ENCODE measurements at regions of chr10 and their contacts with region 1.

Region 1: GRCh38 chr10:83680470-83680891 is 458.8 kb upstream of the GHITM start:
- DNase-seq: peak; percentile 46
- H3K4me3 Mint-ChIP-seq: no peak overlapping the region
- H3K27ac Mint-ChIP-seq: peak overlapping the region; percentile 55
- H3K4me1 Mint-ChIP-seq: peaks cover 29% of the 10 kb centered on the region
- H3K27me3 Mint-ChIP-seq: no peaks in the 10 kb centered on the region

Region 2: DNA sequence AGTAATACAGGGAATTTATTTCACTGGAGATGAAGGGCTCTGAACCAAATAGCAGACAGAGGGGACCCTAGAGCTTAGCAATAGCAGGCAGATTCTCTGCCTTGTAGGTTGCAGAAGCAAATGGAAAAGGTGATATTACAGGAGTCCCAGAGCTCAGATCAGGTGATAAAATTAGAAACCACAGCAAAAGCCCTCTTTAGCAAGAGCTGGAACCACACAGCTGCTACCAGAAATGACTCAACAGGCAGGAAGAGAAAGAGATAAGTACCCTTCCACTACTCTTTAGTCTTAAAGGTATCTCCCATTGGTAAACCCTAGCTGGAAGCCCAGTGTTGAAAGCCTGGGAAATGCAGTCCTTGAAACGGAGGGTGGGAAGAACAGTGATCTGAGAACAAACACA is 76.8 kb before region 1 on chr10:
- intact Hi-C with region 1: loop called (anchors 1 kb)
- DNase-seq: peak; percentile 10
- H3K4me3 Mint-ChIP-seq: no peak overlapping the region
- H3K27ac Mint-ChIP-seq: no peak overlapping the region
- H3K4me1 Mint-ChIP-seq: peaks cover 4% of the 10 kb centered on the region
- H3K27me3 Mint-ChIP-seq: no peaks in the 10 kb centered on the region

Region 3: DNA sequence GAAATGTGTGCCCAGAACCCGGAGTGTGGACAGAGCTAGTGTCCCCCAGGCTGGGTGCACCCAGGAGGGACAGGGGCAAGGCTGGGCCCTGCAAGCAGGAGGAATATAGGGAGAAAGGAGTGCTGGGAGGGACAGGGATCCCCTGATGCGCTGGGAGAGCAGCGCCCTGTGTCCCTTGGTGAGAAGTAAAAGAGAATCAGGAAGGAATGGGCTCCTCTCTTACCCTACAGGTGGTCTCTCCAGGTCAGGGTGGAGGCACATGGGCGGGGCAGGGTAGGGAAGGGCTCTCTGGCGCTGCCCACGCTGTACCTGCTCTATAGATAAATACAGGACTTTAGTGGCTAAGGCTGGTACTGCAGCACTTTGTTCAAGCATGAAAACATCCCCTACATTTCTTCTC is 1932.4 kb after region 1 on chr10:
- intact Hi-C with region 1: loop called (anchors 10 kb)
- DNase-seq: no peak
- H3K4me3 Mint-ChIP-seq: peak overlapping the region; percentile 61
- H3K27ac Mint-ChIP-seq: no peak overlapping the region
- H3K4me1 Mint-ChIP-seq: peaks cover 38% of the 10 kb centered on the region
- H3K27me3 Mint-ChIP-seq: peaks cover 18% of the 10 kb centered on the region

Measured in activated T-helper 2 cell treated with anti-CD3 and anti-CD28 coated beads, Interferon-gamma antibody, Interleukin-2, Interleukin-4, amounts not matched to agents 10 μg/mL and 5 μg/mL and 100 μg/mL, durations not matched to agents 14 hours and 24 hours and 36 hours (primary cell).